Naive thymus-derived CD4-positive, alpha-beta T cell (primary cell): ENCODE measurements at regions of chr13 and their contacts with region 1.

Region 1: DNA sequence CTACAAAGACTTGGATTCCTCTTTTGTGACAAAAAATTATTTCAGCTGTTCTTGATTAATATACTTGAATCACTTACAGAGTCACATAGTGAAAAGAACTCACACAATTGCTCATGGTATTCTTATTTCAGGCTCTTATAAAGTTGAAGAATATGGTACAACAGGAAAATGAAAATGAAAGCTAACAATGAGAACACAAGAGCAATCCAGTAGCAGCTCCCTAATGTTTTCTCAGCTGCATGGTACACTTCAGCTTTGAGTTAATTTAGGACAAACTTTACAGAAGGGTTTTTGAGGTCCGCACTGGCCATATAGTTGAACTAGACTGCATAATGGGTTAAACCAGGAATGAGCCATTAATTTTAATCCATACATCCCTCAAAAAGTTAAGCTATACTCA is 1261.8 kb downstream of the SLITRK5 start:
- DNase-seq: no peak
- ATAC-seq: no peak
- H3K4me3 ChIP-seq: no peak overlapping the region
- H3K4me3 Mint-ChIP-seq: peak overlapping the region in 3 of 10 donors; percentile 6 to 52 (median 17)
- H3K27ac ChIP-seq: no peak overlapping the region
- H3K27ac Mint-ChIP-seq: no peak overlapping the region
- H3K4me1 ChIP-seq: no peaks in the 10 kb centered on the region
- H3K4me1 Mint-ChIP-seq: peaks cover 0 to 10% (median 0%) of the 10 kb centered on the region in 7 donors
- H3K27me3 ChIP-seq: no peaks in the 10 kb centered on the region
- H3K27me3 Mint-ChIP-seq: no peaks in the 10 kb centered on the region

Region 2: DNA sequence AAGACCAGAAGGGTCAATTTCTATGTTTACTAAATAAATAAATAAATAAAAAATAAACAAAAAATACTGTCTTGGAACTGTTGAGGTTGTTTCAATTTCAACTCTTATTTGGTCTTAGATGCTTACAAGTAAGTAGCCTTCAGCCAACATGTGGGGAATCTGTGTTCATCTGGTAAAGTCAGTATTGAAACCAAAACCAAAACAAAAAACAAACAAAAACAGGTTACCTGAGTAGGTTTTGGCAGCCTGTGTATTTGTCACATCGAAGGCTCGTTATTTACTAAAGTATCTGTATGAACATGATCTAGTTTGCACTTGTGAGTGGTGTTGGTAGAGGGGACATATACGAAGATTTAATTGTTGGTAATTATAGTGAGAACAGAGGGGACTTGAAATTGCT is 790.3 kb before region 1 on chr13:
- CTCF ChIA-PET with region 1: no interaction called
- POLR2A ChIA-PET with region 1: no interaction called
- intact Hi-C with region 1: no loop called
- DNase-seq: no peak
- ATAC-seq: no peak
- H3K4me3 ChIP-seq: no peak overlapping the region
- H3K4me3 Mint-ChIP-seq: no peak overlapping the region
- H3K27ac ChIP-seq: no peak overlapping the region
- H3K27ac Mint-ChIP-seq: no peak overlapping the region
- H3K4me1 ChIP-seq: no peaks in the 10 kb centered on the region
- H3K4me1 Mint-ChIP-seq: no peaks in the 10 kb centered on the region
- H3K27me3 ChIP-seq: no peaks in the 10 kb centered on the region
- H3K27me3 Mint-ChIP-seq: no peaks in the 10 kb centered on the region

Region 3: DNA sequence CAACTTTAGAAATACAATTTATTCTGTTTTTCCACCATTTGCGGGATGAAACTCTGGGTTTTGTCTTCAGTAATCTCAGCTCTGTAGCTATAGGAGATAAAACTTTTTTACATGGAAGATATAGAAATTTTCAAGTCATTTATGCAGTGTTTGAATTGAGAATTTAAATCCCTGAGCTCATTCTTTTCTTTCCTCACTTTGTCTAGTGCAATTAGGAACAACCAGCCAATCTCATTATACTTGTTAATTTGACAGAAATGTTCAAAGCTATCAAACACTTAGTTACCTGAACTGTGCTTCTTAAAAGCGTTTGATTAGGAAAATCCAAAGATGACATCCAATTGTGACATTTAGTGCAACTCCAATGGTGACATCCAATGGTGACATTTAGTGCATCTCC is 247.5 kb before region 1 on chr13:
- CTCF ChIA-PET with region 1: no interaction called
- POLR2A ChIA-PET with region 1: no interaction called
- intact Hi-C with region 1: no loop called
- DNase-seq: no peak
- ATAC-seq: no peak
- H3K4me3 ChIP-seq: no peak overlapping the region
- H3K4me3 Mint-ChIP-seq: no peak overlapping the region
- H3K27ac ChIP-seq: no peak overlapping the region
- H3K27ac Mint-ChIP-seq: no peak overlapping the region
- H3K4me1 ChIP-seq: no peaks in the 10 kb centered on the region
- H3K4me1 Mint-ChIP-seq: no peaks in the 10 kb centered on the region
- H3K27me3 ChIP-seq: no peaks in the 10 kb centered on the region
- H3K27me3 Mint-ChIP-seq: no peaks in the 10 kb centered on the region

Region 4: DNA sequence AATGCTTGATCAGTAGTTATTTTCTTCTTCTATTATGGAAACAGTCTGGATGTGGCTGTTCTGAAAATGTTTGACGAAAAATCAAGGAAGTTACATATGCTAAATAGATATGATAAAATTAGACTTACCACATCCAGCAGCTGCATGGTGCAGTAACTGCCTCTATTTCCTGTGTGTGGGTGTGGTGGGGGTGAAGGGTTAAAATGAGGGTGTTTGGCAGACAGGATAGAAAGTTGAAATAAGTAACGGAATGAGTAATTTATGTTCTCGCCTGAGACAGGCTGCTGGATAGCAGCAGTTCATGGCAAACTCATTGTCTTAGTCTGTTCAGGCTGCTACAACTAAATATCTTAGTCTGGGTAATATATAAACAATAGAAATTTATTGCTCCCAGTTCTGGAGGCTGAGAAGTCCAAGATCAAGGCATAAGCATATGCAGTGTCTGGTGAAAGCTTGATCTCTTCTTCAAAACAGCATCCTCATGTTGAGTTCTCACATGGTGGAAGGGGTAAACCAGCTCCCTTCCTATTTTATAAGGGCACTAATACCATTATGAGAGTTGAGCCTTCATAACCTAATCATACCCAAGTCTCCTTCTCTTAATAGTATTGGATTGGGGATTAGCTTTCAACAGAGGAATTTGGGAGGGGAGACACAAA is 12.9 kb before region 1 on chr13:
- CTCF ChIA-PET with region 1: no interaction called
- POLR2A ChIA-PET with region 1: no interaction called
- intact Hi-C with region 1: loop called in 1 of 2 experiments (anchors 1 kb)
- DNase-seq: peak in 6 of 9 donors; percentile 1 to 51 (median 21)
- ATAC-seq: peak; percentile 72
- H3K4me3 ChIP-seq: no peak overlapping the region
- H3K4me3 Mint-ChIP-seq: peak overlapping the region in 8 of 10 donors; percentile 9 to 53 (median 28)
- H3K27ac ChIP-seq: no peak overlapping the region
- H3K27ac Mint-ChIP-seq: peak overlapping the region in 5 of 9 donors; percentile 6 to 70 (median 42)
- H3K4me1 ChIP-seq: no peaks in the 10 kb centered on the region
- H3K4me1 Mint-ChIP-seq: peaks cover 4 to 31% (median 12%) of the 10 kb centered on the region in 7 donors
- H3K27me3 ChIP-seq: no peaks in the 10 kb centered on the region
- H3K27me3 Mint-ChIP-seq: no peaks in the 10 kb centered on the region